Naive thymus-derived CD4-positive, alpha-beta T cell (primary cell): ENCODE measurements at regions of chr4 and their contacts with region 1.

Region 1: GRCh38 chr4:89294573-89295269 is 12.9 kb downstream of the GPRIN3 start:
- DNase-seq: peak in 7 of 9 donors; percentile 62 to 88 (median 81)
- ATAC-seq: peak; percentile 86
- H3K4me3 ChIP-seq: peak overlapping the region; percentile 21
- H3K4me3 Mint-ChIP-seq: peak overlapping the region; percentile 38 to 83 (median 73)
- H3K27ac ChIP-seq: peak overlapping the region; percentile 69
- H3K27ac Mint-ChIP-seq: peak overlapping the region; percentile 81 to 97 (median 94)
- H3K4me1 ChIP-seq: peaks cover 73 to 82% of the 10 kb centered on the region in 2 donors
- H3K4me1 Mint-ChIP-seq: peaks cover 57 to 99% (median 86%) of the 10 kb centered on the region in 7 donors
- H3K27me3 ChIP-seq: no peaks in the 10 kb centered on the region
- H3K27me3 Mint-ChIP-seq: no peaks in the 10 kb centered on the region

Region 2: DNA sequence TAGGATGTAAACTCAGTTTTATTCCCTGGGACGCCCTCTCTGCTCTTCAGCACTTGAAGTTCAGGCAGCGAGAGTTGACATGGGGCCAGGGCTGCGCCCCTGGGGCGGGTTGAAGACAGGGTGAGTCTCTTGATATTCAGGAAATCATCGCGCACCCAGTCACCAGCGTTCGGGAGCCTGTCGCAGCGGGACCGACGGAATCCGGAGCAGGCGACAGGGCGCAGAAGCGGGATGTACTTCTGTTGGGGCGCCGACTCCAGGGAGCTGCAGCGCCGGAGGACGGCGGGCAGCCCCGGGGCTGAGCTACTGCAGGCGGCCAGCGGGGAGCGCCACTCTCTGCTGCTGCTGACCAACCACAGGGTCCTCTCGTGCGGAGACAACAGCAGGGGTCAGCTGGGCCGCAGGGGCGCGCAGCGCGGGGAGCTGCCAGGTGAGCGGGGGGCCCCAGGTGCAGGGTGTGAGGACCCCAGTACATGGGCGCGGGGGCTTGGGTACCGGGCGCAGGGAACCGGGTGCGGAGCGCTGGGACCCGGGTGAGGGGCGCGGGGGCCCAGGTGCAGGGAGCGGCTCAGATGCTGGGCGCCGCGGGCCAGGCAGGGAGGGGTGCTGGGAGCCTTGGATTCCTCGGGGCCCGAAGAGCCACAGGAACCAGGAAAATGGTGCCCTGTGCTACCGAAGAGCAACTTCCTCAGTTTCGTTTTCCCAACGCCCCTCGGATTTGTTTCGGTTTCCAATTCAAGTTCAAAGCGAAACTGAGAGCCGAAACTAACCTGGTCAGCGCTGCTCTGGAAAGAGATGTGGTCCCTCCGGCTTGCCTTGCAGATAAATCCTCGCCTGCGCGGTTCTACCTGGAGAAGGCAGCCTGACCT is 915.8 kb before region 1 on chr4 and contains the start of gene HERC6:
- CTCF ChIA-PET with region 1: no interaction called
- POLR2A ChIA-PET with region 1: no interaction called
- intact Hi-C with region 1: loop called in 1 of 2 experiments (anchors 10 kb)
- DNase-seq: peak; percentile 49 to 77 (median 70)
- ATAC-seq: peak; percentile 80
- H3K4me3 ChIP-seq: peak within 1 kb of the TSS; percentile 95
- H3K4me3 Mint-ChIP-seq: peak within 1 kb of the TSS; percentile 88 to 98 (median 94)
- H3K27ac ChIP-seq: peak within 1 kb of the TSS; percentile 92
- H3K27ac Mint-ChIP-seq: peak within 1 kb of the TSS; percentile 91 to 99 (median 94)
- H3K4me1 ChIP-seq: peaks cover 21 to 27% of the 10 kb centered on the region in 2 donors
- H3K4me1 Mint-ChIP-seq: peaks cover 24 to 60% (median 46%) of the 10 kb centered on the region in 7 donors
- H3K27me3 ChIP-seq: no peaks in the 10 kb centered on the region
- H3K27me3 Mint-ChIP-seq: no peaks in the 10 kb centered on the region
- total RNA-seq, gene HERC6: 12.6 to 43.5 (median 23.0) TPM

Region 3: DNA sequence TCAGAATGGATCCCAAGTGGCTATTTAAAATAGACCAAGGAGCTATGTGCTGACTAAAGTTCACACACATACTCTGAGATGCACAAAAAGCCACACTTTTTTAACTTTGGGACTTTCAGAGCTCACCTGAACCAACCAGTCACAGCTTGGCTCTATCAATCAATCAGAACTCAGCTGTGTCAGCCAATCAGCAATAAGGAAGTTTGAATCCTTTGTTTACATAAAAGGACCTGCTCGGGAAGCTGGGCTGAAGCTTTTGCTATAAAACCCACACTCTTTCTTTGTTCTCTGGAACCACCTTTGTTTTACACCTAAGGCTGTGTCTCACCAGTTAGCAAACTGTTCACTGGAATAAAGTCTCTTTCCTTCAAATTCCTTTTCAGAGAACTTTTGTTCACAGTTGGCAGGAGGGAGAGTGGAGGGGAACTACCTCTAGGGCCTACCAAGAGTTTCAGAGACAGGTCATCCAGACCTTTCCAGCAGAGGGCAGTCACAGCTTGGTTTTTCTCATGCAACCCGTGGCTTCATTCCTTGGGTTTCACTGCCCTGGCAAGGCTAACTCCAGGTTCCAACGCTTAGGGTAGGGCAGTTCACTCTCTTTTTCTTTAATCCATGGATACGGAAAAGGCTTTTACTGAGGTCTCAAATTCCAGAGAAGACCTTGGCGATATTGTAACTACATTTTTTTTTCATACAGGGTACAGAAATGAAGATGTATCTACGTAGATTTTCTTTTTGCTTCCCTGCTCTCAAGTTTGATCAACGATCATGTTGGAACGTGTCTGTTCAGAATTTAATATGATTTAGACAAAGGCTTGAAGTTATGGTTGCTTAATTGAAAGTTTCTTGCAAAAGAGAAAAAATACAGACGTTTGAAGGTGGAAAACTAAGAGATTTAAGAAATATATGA is 67.8 kb before region 1 on chr4:
- CTCF ChIA-PET with region 1: interaction called, 4 read pairs
- POLR2A ChIA-PET with region 1: no interaction called
- intact Hi-C with region 1: loop called in 1 of 2 experiments (anchors 1 kb)
- DNase-seq: peak; percentile 37 to 79 (median 68)
- ATAC-seq: peak; percentile 93
- H3K4me3 ChIP-seq: peak overlapping the region; percentile 21
- H3K4me3 Mint-ChIP-seq: peak overlapping the region in 9 of 10 donors; percentile 54 to 78 (median 63)
- H3K27ac ChIP-seq: no peak overlapping the region
- H3K27ac Mint-ChIP-seq: peak overlapping the region in 2 of 9 donors; percentile 19 to 34
- H3K4me1 ChIP-seq: no peaks in the 10 kb centered on the region
- H3K4me1 Mint-ChIP-seq: peaks cover 0 to 10% (median 5%) of the 10 kb centered on the region in 7 donors
- H3K27me3 ChIP-seq: no peaks in the 10 kb centered on the region
- H3K27me3 Mint-ChIP-seq: peaks cover 0 to 7% (median 0%) of the 10 kb centered on the region in 5 donors

Region 4: GRCh38 chr4:89254847-89255246 is 39.9 kb before region 1 on chr4:
- CTCF ChIA-PET with region 1: interaction called, 9 read pairs
- POLR2A ChIA-PET with region 1: interaction called, 7 read pairs
- intact Hi-C with region 1: loop called (anchors 1 to 2 kb)
- DNase-seq: peak; percentile 23 to 51 (median 35)
- ATAC-seq: peak; percentile 85
- H3K4me3 ChIP-seq: no peak overlapping the region
- H3K4me3 Mint-ChIP-seq: peak overlapping the region in 3 of 10 donors; percentile 3 to 25 (median 6)
- H3K27ac ChIP-seq: no peak overlapping the region
- H3K27ac Mint-ChIP-seq: peak overlapping the region; percentile 15 to 85 (median 66)
- H3K4me1 ChIP-seq: peaks cover 15 to 16% of the 10 kb centered on the region in 2 donors
- H3K4me1 Mint-ChIP-seq: peaks cover 44 to 86% (median 74%) of the 10 kb centered on the region in 7 donors
- H3K27me3 ChIP-seq: no peaks in the 10 kb centered on the region
- H3K27me3 Mint-ChIP-seq: no peaks in the 10 kb centered on the region

Region 5: DNA sequence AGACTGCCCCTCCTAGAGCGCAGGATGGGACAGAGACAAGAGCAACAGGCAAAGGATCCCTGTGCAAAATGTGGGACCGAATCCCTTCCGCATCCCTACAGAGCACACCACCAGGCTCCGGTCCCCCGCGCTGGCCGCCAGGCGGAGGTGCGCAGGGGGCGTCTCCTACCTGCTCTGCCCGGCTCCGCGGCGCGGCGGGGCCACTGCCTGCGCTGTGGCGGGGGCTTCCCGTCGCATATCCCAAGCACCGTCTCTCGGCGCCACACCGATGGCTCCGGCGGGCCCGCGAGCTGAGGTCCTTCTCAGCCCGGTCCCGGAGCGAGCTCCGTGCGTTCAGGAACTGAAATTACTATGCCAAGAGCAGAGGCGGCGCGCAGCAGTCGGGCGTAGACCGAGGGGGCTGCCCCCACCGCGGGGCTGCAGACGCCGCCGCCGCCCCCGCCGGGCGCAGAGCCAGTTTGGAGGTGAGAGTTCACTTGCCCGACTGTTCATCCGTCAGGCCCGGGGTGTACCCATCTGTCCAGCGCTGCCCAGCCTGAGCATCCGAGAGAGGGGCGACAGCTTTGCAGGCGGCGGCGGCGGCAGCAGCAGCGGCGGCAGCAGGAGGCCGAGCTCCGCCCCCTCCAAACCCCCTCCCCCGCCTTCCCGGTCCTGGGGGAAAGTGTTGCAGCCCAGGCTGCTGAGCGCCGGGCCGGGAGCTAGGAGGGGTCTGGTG is 12.9 kb after region 1 on chr4 and contains the start of gene GPRIN3:
- CTCF ChIA-PET with region 1: interaction called, 6 read pairs
- POLR2A ChIA-PET with region 1: interaction called, 20 read pairs
- intact Hi-C with region 1: loop called (anchors 1 kb)
- DNase-seq: peak; percentile 54 to 80 (median 66)
- ATAC-seq: peak; percentile 79
- H3K4me3 ChIP-seq: peak within 1 kb of the TSS; percentile 93
- H3K4me3 Mint-ChIP-seq: peak within 1 kb of the TSS; percentile 80 to 99 (median 94)
- H3K27ac ChIP-seq: peak within 1 kb of the TSS; percentile 81
- H3K27ac Mint-ChIP-seq: peak within 1 kb of the TSS; percentile 83 to 98 (median 90)
- H3K4me1 ChIP-seq: peaks cover 18 to 20% of the 10 kb centered on the region in 2 donors
- H3K4me1 Mint-ChIP-seq: peaks cover 39 to 70% (median 64%) of the 10 kb centered on the region in 7 donors
- H3K27me3 ChIP-seq: no peaks in the 10 kb centered on the region
- H3K27me3 Mint-ChIP-seq: no peaks in the 10 kb centered on the region
- total RNA-seq, gene GPRIN3: 10.2 to 55.5 (median 24.8) TPM

Region 6: DNA sequence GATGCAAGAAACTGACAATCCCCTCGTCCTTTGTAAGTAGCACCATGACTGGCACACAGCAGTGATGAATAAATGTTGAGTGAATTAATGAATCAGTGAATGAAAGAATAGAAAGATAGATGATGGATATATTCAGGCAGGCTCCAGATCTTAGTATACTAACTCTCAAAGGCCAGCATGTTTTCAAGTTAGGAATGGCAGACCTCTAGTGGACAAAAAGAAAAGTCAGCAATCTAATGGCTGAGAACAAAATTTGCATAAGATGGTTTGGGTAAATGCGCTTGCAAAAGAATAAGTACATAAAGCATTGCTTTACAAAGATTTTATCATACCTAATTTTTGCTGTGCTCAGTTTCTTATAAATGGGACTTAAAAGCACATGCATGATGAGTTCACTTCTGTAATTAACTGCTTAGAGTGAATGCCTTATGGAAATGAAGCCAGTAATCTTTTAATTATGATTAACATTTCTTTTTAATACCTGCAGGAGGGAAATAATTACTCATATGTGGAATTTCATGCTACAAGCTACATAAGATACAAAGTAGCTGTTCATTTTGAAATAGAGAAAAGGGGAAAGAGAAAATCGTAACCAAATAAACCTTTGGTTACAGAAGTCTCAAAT is 139.8 kb after region 1 on chr4:
- CTCF ChIA-PET with region 1: interaction called, 3 read pairs
- POLR2A ChIA-PET with region 1: no interaction called
- intact Hi-C with region 1: loop called (anchors 2 to 5 kb)
- DNase-seq: peak in 6 of 9 donors; percentile 28 to 61 (median 45)
- ATAC-seq: peak; percentile 72
- H3K4me3 ChIP-seq: no peak overlapping the region
- H3K4me3 Mint-ChIP-seq: no peak overlapping the region
- H3K27ac ChIP-seq: no peak overlapping the region
- H3K27ac Mint-ChIP-seq: peak overlapping the region in 1 of 9 donors; percentile 14
- H3K4me1 ChIP-seq: no peaks in the 10 kb centered on the region
- H3K4me1 Mint-ChIP-seq: peaks cover 8 to 23% (median 13%) of the 10 kb centered on the region in 7 donors
- H3K27me3 ChIP-seq: no peaks in the 10 kb centered on the region
- H3K27me3 Mint-ChIP-seq: no peaks in the 10 kb centered on the region